GM18951 (cell line): ENCODE measurements at regions of chr3 and their contacts with region 1.

Region 1: DNA sequence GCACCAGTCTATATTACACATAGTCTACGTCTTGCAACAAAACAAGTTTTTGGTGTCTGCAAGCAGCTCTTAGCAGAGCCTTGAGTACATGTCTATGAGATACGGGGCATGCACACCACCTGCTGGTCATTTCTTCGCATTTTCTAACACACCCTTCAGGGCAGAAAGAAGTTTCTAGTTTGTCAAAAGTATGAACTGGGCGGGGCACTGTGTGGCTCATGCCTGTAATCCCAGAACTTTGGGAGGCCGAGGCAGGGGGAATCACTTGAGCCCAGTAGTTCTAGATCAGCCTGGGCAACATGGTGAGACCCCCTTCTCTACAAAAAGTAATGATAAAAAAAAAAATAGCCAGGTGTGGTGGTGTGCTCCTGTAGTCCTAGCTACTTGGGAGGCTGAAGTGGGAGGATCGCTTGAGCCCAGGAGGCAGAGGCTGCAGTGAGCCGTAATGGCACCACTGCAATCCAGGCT is 64.2 kb upstream of the ARL8B start:
- POLR2A ChIP-seq: no peak

Region 2: GRCh38 chr3:4340411-4341335 is 717.2 kb before region 1 on chr3:
- in situ Hi-C with region 1: loop called (anchors 25 kb)
- POLR2A ChIP-seq: no peak

Region 3: DNA sequence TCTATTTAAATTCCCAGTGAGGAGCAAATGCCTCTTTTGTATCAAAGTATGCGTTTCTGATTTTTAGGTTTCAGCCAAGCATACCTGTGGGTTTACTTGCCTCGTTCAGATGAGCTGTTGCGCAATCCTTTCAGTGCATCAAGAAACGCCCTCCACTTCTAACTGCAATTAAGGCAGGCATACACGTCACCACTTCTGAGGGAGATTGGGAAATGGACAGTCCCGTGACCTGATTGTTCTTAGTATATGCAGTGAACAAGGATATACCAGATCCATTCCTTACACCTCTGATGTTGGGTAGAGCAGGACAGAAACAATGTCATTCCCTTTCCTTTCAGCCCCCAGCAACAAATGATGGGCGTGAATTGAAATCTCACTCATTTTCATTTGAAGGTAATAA is 345.7 kb before region 1 on chr3:
- in situ Hi-C with region 1: loop called (anchors 10 kb)
- POLR2A ChIP-seq: no peak

Region 4: GRCh38 chr3:5874931-5875341 is 817.0 kb after region 1 on chr3:
- in situ Hi-C with region 1: no loop called
- POLR2A ChIP-seq: no peak